Activated CD8-positive, alpha-beta T cell treated with anti-CD3 and anti-CD28 coated beads for 36 hours (primary cell): ENCODE measurements at regions of chr11 and their contacts with region 1.

Region 1: GRCh38 chr11:3841426-3842350 is 929 bp upstream of the RHOG start:
- DNase-seq: peak; percentile 40
- ATAC-seq: no peak
- H3K4me3 Mint-ChIP-seq: peak overlapping the region; percentile 87
- H3K27ac Mint-ChIP-seq: peak overlapping the region; percentile 94
- H3K4me1 Mint-ChIP-seq: peaks cover 51% of the 10 kb centered on the region
- H3K27me3 Mint-ChIP-seq: no peaks in the 10 kb centered on the region
- CTCF ChIP-seq: peak; percentile 69

Region 2: GRCh38 chr11:3824714-3825472 is 16.8 kb before region 1 on chr11:
- CTCF ChIA-PET with region 1: interaction called, 15 read pairs
- POLR2A ChIA-PET with region 1: interaction called, 21 read pairs
- intact Hi-C with region 1: no loop called
- DNase-seq: peak; percentile 92
- ATAC-seq: peak; percentile 98
- H3K4me3 Mint-ChIP-seq: no peak overlapping the region
- H3K27ac Mint-ChIP-seq: peak overlapping the region; percentile 76
- H3K4me1 Mint-ChIP-seq: peaks cover 34% of the 10 kb centered on the region
- H3K27me3 Mint-ChIP-seq: no peaks in the 10 kb centered on the region
- CTCF ChIP-seq: peak; percentile 82

Region 3: DNA sequence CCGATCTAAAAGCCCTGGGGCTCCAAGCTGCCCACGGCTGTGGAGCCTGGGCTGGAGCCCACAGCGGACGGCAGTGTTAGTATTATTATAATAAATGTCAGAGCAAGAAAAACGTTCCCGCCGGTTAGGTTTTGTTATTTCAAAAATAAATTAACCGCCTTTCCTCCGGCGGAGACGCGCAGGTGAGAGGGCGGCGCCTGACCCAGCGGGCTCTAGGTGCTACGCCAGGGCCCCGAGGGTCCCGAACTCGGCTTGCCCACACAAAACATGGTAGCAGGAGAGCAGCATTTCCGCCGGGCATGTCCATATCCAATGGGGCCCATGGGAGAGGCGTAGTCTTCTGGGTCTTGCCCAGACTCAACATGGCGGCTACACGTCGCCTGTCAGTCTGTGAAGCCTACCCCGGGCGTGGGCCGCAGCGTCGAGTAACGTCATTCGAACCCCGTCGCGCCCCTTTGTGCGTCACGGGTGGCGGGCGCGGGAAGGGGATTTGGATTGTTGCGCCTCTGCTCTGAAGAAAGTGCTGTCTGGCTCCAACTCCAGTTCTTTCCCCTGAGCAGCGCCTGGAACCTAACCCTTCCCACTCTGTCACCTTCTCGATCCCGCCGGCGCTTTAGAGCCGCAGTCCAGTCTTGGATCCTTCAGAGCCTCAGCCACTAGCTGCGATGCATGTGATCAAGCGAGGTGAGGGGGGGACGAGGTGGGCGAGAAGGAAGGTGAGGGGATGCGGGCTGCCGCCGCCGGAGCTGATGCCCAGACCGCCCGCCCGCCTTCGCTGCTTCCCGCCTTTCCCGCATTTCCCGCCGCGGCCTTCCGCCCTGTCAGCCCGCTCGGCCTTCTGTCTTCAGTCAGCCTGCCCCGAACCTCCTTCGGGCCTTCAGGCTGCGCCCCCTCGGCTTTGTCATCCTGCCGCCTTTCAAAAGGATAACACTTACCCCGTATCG is 252.9 kb after region 1 on chr11 and contains the start of gene RRM1:
- CTCF ChIA-PET with region 1: interaction called, 3 read pairs
- POLR2A ChIA-PET with region 1: interaction called, 3 read pairs
- intact Hi-C with region 1: loop called (anchors 5 kb)
- DNase-seq: peak; percentile 95
- ATAC-seq: peak; percentile 97
- H3K4me3 Mint-ChIP-seq: peak within 1 kb of the TSS; percentile 94
- H3K27ac Mint-ChIP-seq: peak within 1 kb of the TSS; percentile 97
- H3K4me1 Mint-ChIP-seq: peaks cover 67% of the 10 kb centered on the region
- H3K27me3 Mint-ChIP-seq: no peaks in the 10 kb centered on the region
- CTCF ChIP-seq: no peak
- total RNA-seq, gene RRM1: 192 to 194 TPM